ENCODE measurements at regions of chr11 and their contacts with region 1.

Region 1: GRCh38 chr11:60530454-60531100 is 15.4 kb downstream of the MS4A13 start:
- DNase-seq: no peak
- H3K4me3 ChIP-seq: no peak overlapping the region
- H3K27ac ChIP-seq: no peak overlapping the region
- H3K4me1 ChIP-seq: no peaks in the 10 kb centered on the region
- H3K27me3 ChIP-seq: no peaks in the 10 kb centered on the region
- CTCF ChIP-seq: no peak
- POLR2A ChIP-seq: no peak

Region 2: GRCh38 chr11:60570970-60571369 is 40.4 kb after region 1 on chr11:
- CTCF ChIA-PET with region 1: no interaction called
- POLR2A ChIA-PET with region 1: no interaction called
- dilution Hi-C with region 1: no loop called
- intact Hi-C with region 1: loop called (anchors 5 kb)
- DNase-seq: no peak
- H3K4me3 ChIP-seq: no peak overlapping the region
- H3K27ac ChIP-seq: no peak overlapping the region
- H3K4me1 ChIP-seq: no peaks in the 10 kb centered on the region
- H3K27me3 ChIP-seq: no peaks in the 10 kb centered on the region
- CTCF ChIP-seq: no peak
- POLR2A ChIP-seq: no peak

Measured in endothelial cell of umbilical vein (primary cell).